ENCODE measurements at regions of chr2 and their contacts with region 1.

Region 1: DNA sequence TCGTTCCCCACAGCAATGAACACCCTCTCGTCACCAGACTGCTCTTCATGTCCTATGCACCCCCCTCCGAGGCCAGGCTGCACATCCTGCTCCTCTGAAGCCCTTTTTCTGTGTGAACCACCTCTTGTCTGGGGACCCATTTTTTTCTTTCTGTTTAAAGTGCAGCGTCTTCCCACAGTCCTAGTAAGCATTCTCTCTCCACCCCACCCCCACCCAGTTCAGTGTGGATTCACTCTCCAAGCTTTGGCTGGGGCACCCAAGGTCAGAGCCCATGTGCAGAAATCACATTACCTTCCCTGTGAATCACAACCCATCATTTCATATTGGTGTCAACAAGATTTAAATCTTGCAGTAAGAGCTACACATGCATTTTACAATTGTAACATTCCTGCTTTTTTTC is 26.4 kb upstream of the PKDCC start:
- DNase-seq: no peak
- H3K4me3 ChIP-seq: no peak overlapping the region
- H3K27ac ChIP-seq: no peak overlapping the region
- H3K4me1 ChIP-seq: 0 out of 2 replicates have a peak, but pooled peaks cover 7% of the 10 kb centered on the region
- H3K27me3 ChIP-seq: no peaks in the 10 kb centered on the region; the same call in 1 of the 2 replicates
- CTCF ChIP-seq: no peak

Region 2: DNA sequence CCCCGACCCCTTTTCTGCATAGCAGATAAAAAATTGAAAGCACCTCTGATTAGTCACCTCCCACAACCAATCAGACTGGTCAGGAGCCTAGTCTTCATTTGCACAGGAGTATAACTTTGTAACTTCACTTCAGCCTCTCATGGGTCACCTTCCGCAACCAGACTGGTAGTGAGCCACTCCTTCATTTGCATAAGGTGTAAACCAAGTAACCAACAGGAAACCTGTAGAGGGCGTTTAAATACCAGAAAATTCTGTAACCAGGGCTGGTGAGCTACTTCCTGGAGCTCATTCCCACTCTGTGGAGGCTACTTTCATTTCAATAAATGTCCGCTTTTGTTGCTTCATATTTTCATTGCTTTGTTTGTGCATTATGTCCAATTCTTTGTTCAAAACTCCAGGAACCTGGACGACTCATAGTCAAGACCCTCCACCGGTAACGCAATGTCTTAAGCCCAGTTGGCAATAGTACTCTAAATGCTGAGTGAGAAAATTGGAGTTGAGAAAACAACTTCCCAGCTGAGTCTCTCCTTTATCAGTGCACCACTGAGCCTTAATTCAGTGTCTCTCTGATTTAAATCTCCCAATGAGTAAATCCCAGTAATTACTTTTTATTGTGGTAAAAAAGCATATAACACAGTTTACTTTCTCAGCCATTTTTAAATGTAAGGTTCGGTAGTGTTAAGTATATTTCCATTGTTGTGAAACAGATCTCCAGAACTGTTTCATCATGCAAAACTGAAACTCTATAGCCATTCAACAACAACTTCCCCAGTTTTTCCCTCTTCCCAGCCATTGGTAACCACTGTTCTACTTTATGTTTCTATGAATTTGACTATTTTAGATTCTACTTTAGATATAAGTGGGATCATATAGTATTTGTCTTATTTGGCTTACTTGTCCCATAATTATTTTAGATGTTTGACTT is 1176.8 kb before region 1 on chr2:
- CTCF ChIA-PET with region 1: no interaction called
- POLR2A ChIA-PET with region 1: interaction called, 10 read pairs
- intact Hi-C with region 1: no loop called
- DNase-seq: peak; percentile 28 to 61
- H3K4me3 ChIP-seq: no peak overlapping the region
- H3K27ac ChIP-seq: no peak overlapping the region
- H3K4me1 ChIP-seq: no peaks in the 10 kb centered on the region
- H3K27me3 ChIP-seq: no peaks in the 10 kb centered on the region
- CTCF ChIP-seq: peak; percentile 40; the same call in 1 of the 2 replicates

Region 3: DNA sequence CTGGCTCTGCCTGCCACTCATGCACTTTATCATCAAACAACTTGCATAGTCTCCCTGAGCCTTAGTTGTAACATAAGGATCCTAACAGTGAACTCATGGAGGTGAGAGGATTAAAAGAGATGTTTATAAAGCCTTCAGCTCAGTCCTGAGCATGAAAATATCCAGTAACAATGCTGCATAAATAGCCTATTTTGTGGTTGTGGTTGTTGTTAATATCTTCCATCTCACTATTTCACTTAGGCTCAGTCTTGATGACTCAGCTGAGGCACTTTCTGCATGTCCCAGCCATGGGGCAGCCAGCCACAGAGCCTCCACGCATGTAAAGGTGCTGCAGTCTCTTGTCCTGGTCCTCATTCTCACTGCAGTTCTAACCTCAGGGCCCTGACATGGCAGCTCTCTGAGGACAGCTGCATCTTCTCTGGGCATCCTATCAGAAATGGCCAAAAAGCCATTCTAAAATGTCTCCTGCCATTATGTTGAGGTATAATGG is 192.4 kb before region 1 on chr2:
- CTCF ChIA-PET with region 1: no interaction called
- POLR2A ChIA-PET with region 1: no interaction called
- intact Hi-C with region 1: no loop called
- DNase-seq: no peak
- H3K4me3 ChIP-seq: no peak overlapping the region
- H3K27ac ChIP-seq: no peak overlapping the region
- H3K4me1 ChIP-seq: no peaks in the 10 kb centered on the region
- H3K27me3 ChIP-seq: peaks cover 66% of the 10 kb centered on the region
- CTCF ChIP-seq: no peak

Region 4: DNA sequence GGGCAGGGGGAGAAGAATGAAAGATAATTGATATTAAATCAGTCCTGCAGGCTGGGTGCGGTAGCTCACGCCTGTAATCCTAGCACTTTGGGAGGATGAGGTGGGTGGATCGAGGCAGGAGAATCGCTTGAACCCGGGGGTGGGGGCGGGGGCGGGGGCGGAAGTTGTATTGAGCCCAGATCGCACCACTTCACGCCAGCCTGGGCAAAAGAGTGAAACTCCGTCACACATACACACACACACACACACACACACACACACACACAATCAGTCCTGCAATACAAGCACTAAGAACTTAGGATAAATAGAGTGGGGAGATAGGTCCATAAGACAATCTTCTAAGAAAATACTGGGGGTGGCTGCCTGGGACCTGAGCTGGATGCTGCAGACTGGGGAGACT is 11.3 kb after region 1 on chr2:
- CTCF ChIA-PET with region 1: no interaction called
- POLR2A ChIA-PET with region 1: interaction called, 11 read pairs
- intact Hi-C with region 1: no loop called
- DNase-seq: no peak
- H3K4me3 ChIP-seq: no peak overlapping the region
- H3K27ac ChIP-seq: no peak overlapping the region
- H3K4me1 ChIP-seq: no peaks in the 10 kb centered on the region
- H3K27me3 ChIP-seq: no peaks in the 10 kb centered on the region
- CTCF ChIP-seq: no peak